ENCODE measurements at regions of chr12 and their contacts with region 1.

Region 1: GRCh38 chr12:20601668-20602280 is 93.4 kb upstream of the SLCO1C1 start:
- DNase-seq: peak; percentile 22
- H3K4me3 ChIP-seq: no peak overlapping the region
- H3K27ac ChIP-seq: peak overlapping the region; percentile 47 to 97; a peak in 3 of 4 replicates
- H3K4me1 ChIP-seq: peaks cover 7 to 10% of the 10 kb centered on the region in 2 experiments; a peak in 3 of 4 replicates
- H3K27me3 ChIP-seq: no peaks in the 10 kb centered on the region
- CTCF ChIP-seq: peak; percentile 74
- EP300 ChIP-seq: no peak
- RAD21 ChIP-seq: peak; percentile 79

Region 2: GRCh38 chr12:19757317-19757877 is 844.4 kb before region 1 on chr12:
- CTCF ChIA-PET with region 1: interaction called, 15 read pairs
- POLR2A ChIA-PET with region 1: no interaction called
- DNase-seq: peak; percentile 31
- H3K4me3 ChIP-seq: no peak overlapping the region
- H3K27ac ChIP-seq: peak overlapping the region in 1 of 2 experiments; percentile 55; a peak in 1 of 4 replicates
- H3K4me1 ChIP-seq: no peaks in the 10 kb centered on the region; a peak in 2 of 4 replicates
- H3K27me3 ChIP-seq: no peaks in the 10 kb centered on the region
- CTCF ChIP-seq: peak; percentile 79
- EP300 ChIP-seq: no peak
- RAD21 ChIP-seq: peak; percentile 87

Region 3: GRCh38 chr12:20376984-20377383 is 224.8 kb before region 1 on chr12:
- CTCF ChIA-PET with region 1: interaction called, 14 read pairs
- POLR2A ChIA-PET with region 1: no interaction called
- DNase-seq: peak; percentile 14
- H3K4me3 ChIP-seq: no peak overlapping the region
- H3K27ac ChIP-seq: peak overlapping the region in 1 of 2 experiments; percentile 51; a peak in 2 of 4 replicates
- H3K4me1 ChIP-seq: peaks cover 0 to 15% of the 10 kb centered on the region in 2 experiments; a peak in 3 of 4 replicates
- H3K27me3 ChIP-seq: no peaks in the 10 kb centered on the region
- CTCF ChIP-seq: peak; percentile 68
- EP300 ChIP-seq: no peak
- RAD21 ChIP-seq: peak; percentile 80

Region 4: GRCh38 chr12:20508362-20508761 is 93.4 kb before region 1 on chr12:
- CTCF ChIA-PET with region 1: interaction called, 10 read pairs
- POLR2A ChIA-PET with region 1: no interaction called
- DNase-seq: no peak
- H3K4me3 ChIP-seq: no peak overlapping the region
- H3K27ac ChIP-seq: peak overlapping the region in 1 of 2 experiments; percentile 95; a peak in 2 of 4 replicates
- H3K4me1 ChIP-seq: peaks cover 6 to 12% of the 10 kb centered on the region in 2 experiments; a peak in 2 of 4 replicates
- H3K27me3 ChIP-seq: no peaks in the 10 kb centered on the region
- CTCF ChIP-seq: no peak
- EP300 ChIP-seq: no peak
- RAD21 ChIP-seq: no peak

Region 5: GRCh38 chr12:20588042-20588441 is 13.7 kb before region 1 on chr12:
- CTCF ChIA-PET with region 1: interaction called, 21 read pairs
- POLR2A ChIA-PET with region 1: no interaction called
- DNase-seq: peak; percentile 79
- H3K4me3 ChIP-seq: no peak overlapping the region
- H3K27ac ChIP-seq: peak overlapping the region in 1 of 2 experiments; percentile 98; a peak in 3 of 4 replicates
- H3K4me1 ChIP-seq: peaks cover 0 to 26% of the 10 kb centered on the region in 2 experiments; a peak in 2 of 4 replicates
- H3K27me3 ChIP-seq: no peaks in the 10 kb centered on the region
- CTCF ChIP-seq: no peak
- EP300 ChIP-seq: peak in 1 of 2 experiments; percentile 99; a peak in 2 of 4 replicates
- RAD21 ChIP-seq: no peak; the same call in 1 of the 2 replicates